H1 (cell line): ENCODE measurements at regions of chr20 and their contacts with region 1.

Region 1: GRCh38 chr20:33852626-33853506 is 41.7 kb downstream of the CHMP4B start:
- DNase-seq: no peak
- H3K4me3 ChIP-seq: no peak overlapping the region
- H3K27ac ChIP-seq: no peak overlapping the region
- H3K4me1 ChIP-seq: no peaks in the 10 kb centered on the region
- H3K27me3 ChIP-seq: no peaks in the 10 kb centered on the region
- CTCF ChIP-seq: no peak
- EP300 ChIP-seq: no peak
- POLR2A ChIP-seq: no peak
- RAD21 ChIP-seq: no peak

Region 2: DNA sequence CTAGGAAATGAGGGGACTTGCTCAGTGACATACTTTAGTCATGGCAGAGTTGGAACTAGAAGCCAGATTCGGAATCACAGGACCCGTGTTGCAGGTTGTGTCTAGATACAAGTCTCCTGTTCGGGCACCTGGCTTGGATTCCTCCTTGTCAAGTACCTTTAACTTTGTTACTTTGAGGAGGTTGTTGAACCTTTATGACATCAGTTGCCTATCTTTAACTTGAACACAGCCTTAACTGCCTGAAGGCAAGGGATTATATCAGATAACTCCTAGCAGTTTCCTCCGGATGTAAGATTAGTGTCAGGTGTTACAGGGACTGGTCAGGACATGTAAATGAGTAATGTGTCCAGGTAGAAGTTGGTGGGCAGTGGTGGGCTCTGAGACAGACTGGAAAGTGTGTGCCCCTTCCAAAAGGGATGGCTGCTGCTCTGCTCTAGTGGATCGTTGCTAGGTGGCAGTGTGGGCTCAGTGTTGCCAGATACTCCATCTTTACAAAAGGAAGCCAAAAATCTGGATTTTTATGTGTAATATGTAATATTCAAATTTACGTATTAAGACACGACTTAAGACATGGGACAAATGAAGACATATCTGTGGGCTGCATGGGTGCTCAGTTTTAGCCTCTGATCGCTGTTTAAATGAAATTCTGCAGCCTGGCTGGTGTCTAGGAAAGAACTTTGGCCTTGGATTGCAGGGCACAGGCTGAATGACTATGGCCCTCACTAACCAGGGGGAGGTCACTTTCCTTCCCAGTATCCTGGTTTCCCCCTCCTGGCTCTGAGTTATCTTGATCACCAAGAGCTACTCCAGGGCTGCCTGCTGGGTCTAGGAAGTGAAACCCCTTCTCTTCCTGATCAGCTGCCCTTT is 14.6 kb before region 1 on chr20:
- CTCF ChIA-PET with region 1: interaction called, 11 read pairs
- POLR2A ChIA-PET with region 1: interaction called, 5 read pairs
- DNase-seq: no peak
- H3K4me3 ChIP-seq: no peak overlapping the region
- H3K27ac ChIP-seq: no peak overlapping the region
- H3K4me1 ChIP-seq: peaks cover 0 to 22% (median 8%) of the 10 kb centered on the region in 4 experiments; a peak in 5 of 7 replicates
- H3K27me3 ChIP-seq: no peaks in the 10 kb centered on the region
- CTCF ChIP-seq: peak in 2 of 3 experiments; percentile 19 to 31; a peak in 2 of 4 replicates
- EP300 ChIP-seq: no peak
- POLR2A ChIP-seq: no peak
- RAD21 ChIP-seq: peak in 1 of 2 experiments; percentile 33; a peak in 2 of 4 replicates